ENCODE measurements at regions of chr15 and their contacts with region 1.

Region 1: DNA sequence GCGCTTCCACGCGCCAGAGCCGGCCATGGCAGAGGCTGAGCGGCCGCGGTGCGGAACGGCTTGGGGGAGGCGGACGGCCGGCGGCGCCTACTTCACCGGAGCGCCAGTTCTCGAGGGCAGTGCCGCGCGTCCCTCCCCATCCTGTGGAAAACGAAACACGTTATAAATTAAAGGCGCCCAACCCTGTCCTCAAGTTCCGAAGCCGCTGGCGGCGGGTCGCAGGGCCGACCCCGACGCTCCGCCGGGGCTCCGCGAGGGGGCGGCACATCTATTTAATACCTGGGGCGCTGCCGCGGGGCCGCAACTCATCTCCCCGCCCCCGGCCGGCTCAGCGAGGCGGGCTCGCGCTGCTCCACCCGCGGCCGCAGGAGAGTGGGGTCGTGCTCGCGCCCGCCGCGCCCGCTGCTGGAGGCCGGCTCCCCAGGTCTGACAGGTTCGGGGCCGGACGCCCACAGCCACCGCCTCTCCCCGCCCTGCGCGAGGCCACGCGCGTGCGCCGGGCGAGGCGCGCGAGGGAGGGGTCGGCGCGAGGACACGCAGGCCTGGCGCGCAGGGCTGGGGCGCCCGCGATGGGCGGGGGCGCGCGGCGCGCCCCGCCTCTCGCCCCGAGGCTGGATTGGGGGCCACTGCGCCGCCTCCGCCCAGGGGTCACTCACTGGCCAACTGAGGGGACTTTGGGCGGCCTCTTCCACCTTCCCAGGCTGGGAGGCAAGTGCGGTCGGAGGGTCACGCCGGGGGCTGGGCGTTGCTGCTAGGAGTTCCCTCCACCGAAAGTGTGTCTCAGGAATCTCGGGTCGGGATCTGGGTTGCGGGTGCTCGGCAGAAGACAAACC is at the start of gene SLC30A4:
- DNase-seq: peak; percentile 31 to 87 (median 54)
- ATAC-seq: peak; percentile 86
- H3K4me3 ChIP-seq: peak within 1 kb of the TSS; percentile 87
- H3K4me3 Mint-ChIP-seq: peak within 1 kb of the TSS; percentile 97
- H3K27ac ChIP-seq: no peak within 1 kb of the TSS
- H3K27ac Mint-ChIP-seq: peak within 1 kb of the TSS; percentile 73
- H3K4me1 ChIP-seq: peaks cover 19% of the 10 kb centered on the region
- H3K4me1 Mint-ChIP-seq: peaks cover 18% of the 10 kb centered on the region
- H3K27me3 ChIP-seq: no peaks in the 10 kb centered on the region
- H3K27me3 Mint-ChIP-seq: no peaks in the 10 kb centered on the region
- CTCF ChIP-seq: peak; percentile 54
- total RNA-seq, gene SLC30A4: 2.1 to 2.3 TPM

Region 2: GRCh38 chr15:45587095-45587860 is 64.7 kb after region 1 on chr15 and contains the start of gene BLOC1S6:
- CTCF ChIA-PET with region 1: interaction called, 3 read pairs
- POLR2A ChIA-PET with region 1: interaction called, 15 read pairs
- intact Hi-C with region 1: loop called (anchors 2 to 10 kb)
- DNase-seq: peak; percentile 78 to 95 (median 85)
- ATAC-seq: peak; percentile 78
- H3K4me3 ChIP-seq: peak within 1 kb of the TSS; percentile 94
- H3K4me3 Mint-ChIP-seq: peak within 1 kb of the TSS; percentile 99
- H3K27ac ChIP-seq: peak within 1 kb of the TSS; percentile 95 to 99
- H3K27ac Mint-ChIP-seq: peak within 1 kb of the TSS; percentile 100
- H3K4me1 ChIP-seq: peaks cover 21% of the 10 kb centered on the region
- H3K4me1 Mint-ChIP-seq: peaks cover 43% of the 10 kb centered on the region
- H3K27me3 ChIP-seq: no peaks in the 10 kb centered on the region
- H3K27me3 Mint-ChIP-seq: no peaks in the 10 kb centered on the region
- CTCF ChIP-seq: no peak
- total RNA-seq, gene BLOC1S6: 68.5 TPM

Region 3: GRCh38 chr15:45611305-45611704 is 88.8 kb after region 1 on chr15:
- CTCF ChIA-PET with region 1: no interaction called
- POLR2A ChIA-PET with region 1: no interaction called
- intact Hi-C with region 1: loop called (anchors 2 to 5 kb)
- DNase-seq: peak in 3 of 14 experiments; percentile 30 to 37 (median 33)
- ATAC-seq: no peak
- H3K4me3 ChIP-seq: no peak overlapping the region
- H3K4me3 Mint-ChIP-seq: no peak overlapping the region
- H3K27ac ChIP-seq: no peak overlapping the region
- H3K27ac Mint-ChIP-seq: no peak overlapping the region
- H3K4me1 ChIP-seq: no peaks in the 10 kb centered on the region
- H3K4me1 Mint-ChIP-seq: no peaks in the 10 kb centered on the region
- H3K27me3 ChIP-seq: no peaks in the 10 kb centered on the region
- H3K27me3 Mint-ChIP-seq: no peaks in the 10 kb centered on the region
- CTCF ChIP-seq: peak; percentile 50

Region 4: DNA sequence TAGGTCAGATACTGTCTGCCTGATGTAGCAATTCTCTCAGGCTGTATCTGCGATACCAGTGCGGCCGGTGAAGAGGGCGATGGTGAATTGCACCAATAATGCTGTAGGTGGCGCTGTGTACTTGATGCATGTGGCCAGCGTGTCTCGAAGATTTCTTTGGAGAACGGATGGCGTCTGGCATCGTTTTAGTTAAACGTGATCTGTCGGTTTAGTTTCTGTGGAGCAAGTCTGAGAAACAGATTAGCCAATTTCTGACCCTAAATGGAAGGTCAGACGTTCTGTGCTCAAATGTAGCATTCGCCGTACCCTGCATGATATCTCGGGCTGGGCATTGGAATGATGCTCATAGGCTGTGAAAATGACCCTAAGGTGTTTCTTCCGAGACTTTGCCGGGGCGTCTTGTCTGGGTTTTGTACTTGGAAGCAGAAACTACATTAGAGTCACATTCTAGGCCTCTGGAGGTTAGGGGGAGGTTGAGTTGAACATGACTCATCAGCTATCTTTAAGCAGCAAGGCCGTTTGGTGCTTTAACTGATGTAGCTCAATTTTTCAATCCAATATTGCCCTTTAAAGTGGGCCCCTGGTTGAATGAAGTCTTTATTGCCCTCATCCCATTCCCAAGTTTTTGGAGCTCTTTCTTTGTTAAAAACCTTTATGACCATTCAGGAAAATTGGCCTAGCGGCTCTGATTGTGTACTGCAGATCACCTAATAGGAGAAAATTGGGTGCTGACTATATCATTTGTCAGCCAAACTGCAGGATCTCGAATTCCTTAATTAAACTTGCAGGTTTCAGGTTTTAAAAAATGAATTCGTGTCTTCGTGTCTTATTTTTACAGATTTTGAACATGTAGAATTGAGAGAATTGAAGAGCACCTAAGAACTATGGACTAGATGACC is 192.3 kb after region 1 on chr15:
- CTCF ChIA-PET with region 1: no interaction called
- POLR2A ChIA-PET with region 1: no interaction called
- intact Hi-C with region 1: no loop called
- DNase-seq: peak in 10 of 14 experiments; percentile 13 to 62 (median 22)
- ATAC-seq: peak; percentile 37
- H3K4me3 ChIP-seq: no peak overlapping the region
- H3K4me3 Mint-ChIP-seq: no peak overlapping the region
- H3K27ac ChIP-seq: no peak overlapping the region
- H3K27ac Mint-ChIP-seq: no peak overlapping the region
- H3K4me1 ChIP-seq: no peaks in the 10 kb centered on the region
- H3K4me1 Mint-ChIP-seq: no peaks in the 10 kb centered on the region
- H3K27me3 ChIP-seq: peaks cover 2 to 25% of the 10 kb centered on the region in 2 experiments
- H3K27me3 Mint-ChIP-seq: peaks cover 37% of the 10 kb centered on the region
- CTCF ChIP-seq: peak; percentile 61